GM10248 (cell line): ENCODE measurements at regions of chr3 and their contacts with region 1.

Region 1: GRCh38 chr3:149077628-149078027 is 8.7 kb downstream of the HLTF start:
- DNase-seq: no peak
- CTCF ChIP-seq: no peak

Region 2: DNA sequence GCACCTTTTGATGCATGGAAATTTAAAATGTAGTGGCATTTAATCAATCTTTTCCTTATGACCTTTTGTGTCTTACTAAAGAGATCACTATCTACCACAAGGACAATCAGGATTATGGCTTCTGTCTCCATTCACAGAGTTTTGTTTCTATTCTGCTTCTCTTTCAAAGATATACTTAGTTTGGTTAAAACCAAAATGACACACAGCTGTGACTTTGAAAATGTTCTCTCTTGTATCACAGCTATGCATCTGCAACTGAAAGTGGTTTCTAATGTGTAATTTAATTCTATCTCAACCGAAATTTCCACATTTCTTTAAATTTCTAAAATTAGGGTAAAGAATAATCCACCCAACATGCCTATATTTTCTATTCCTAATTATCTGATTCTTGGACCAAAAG is 19.0 kb before region 1 on chr3:
- CTCF ChIA-PET with region 1: interaction called, 11 read pairs
- POLR2A ChIA-PET with region 1: no interaction called
- DNase-seq: peak; percentile 25
- CTCF ChIP-seq: no peak